Motor neuron (in vitro differentiated cells): ENCODE measurements at regions of chr2 and their contacts with region 1.

Region 1: GRCh38 chr2:152740743-152741328 is 22.4 kb downstream of the ARL6IP6 start:
- ATAC-seq: peak in 1 of 8 experiments; percentile 35
- H3K4me3 ChIP-seq: no peak overlapping the region
- H3K27ac ChIP-seq: no peak overlapping the region
- H3K4me1 ChIP-seq: peaks cover 0 to 7% of the 10 kb centered on the region in 2 donors

Region 2: GRCh38 chr2:152924722-152925121 is 183.9 kb after region 1 on chr2:
- in situ Hi-C with region 1: loop called in 1 of 9 experiments (anchors 25 kb)
- ATAC-seq: no peak
- H3K4me3 ChIP-seq: no peak overlapping the region
- H3K27ac ChIP-seq: no peak overlapping the region
- H3K4me1 ChIP-seq: no peaks in the 10 kb centered on the region

Region 3: DNA sequence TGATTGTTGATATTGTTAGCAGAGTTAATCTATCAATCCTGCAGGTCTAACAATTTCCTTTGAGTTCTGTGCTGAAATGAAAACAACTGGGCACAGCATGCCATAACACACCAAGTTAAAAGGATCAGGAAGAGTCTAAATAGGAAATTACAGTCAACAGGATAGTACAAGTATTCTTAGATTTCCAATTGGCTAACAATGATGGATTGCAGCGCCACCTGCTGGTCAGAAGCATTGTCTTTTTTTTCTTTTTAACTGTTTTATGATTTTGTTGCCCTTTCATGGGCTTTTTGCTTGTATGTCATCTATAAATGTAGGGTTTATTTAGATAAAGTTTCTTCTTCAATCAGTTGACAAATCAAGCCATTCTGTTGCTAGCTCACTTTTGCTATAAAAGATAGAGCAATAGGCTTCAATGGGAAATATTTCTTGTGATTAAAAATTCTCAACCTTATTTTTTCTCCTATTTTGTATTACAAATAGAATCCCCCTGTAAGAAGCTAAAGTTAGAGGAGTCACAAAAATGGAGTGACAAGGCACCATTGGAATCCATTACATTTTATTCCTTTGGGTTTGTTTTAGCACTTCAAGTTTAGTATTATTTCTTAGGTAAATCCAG is 778.5 kb after region 1 on chr2:
- in situ Hi-C with region 1: loop called in 2 of 9 experiments (anchors 25 kb)
- ATAC-seq: peak in 6 of 8 experiments; percentile 28 to 55 (median 48)
- H3K4me3 ChIP-seq: no peak overlapping the region
- H3K27ac ChIP-seq: no peak overlapping the region
- H3K4me1 ChIP-seq: peaks cover 0 to 2% of the 10 kb centered on the region in 2 donors